AG04450 (cell line): ENCODE measurements at regions of chr15 and their contacts with region 1.

Region 1: DNA sequence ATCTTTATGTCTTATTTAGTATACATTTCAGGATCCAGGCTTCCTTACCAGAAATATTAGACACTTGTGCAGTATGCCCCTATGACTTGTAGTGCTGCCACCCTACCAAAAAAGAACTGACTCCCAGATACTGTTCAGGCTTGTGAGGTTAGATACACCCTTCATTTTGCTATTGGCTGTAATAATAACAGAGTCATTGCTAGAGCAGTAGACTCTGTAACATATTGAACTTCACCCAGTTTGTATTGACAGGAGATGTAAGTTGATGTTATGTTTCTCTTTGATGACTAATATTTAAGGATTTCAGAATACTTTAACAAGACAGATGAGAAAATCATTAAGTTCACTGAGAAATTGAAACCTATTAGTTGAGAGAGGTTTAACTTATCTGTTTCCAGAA is 32.9 kb downstream of the RNF111 start:
- DNase-seq: no peak
- H3K4me3 ChIP-seq: no peak overlapping the region
- H3K27ac ChIP-seq: no peak overlapping the region
- H3K27me3 ChIP-seq: no peaks in the 10 kb centered on the region
- CTCF ChIP-seq: no peak

Region 2: GRCh38 chr15:58987489-58988005 is 32.8 kb before region 1 on chr15 and contains the start of gene RNF111:
- CTCF ChIA-PET with region 1: no interaction called
- POLR2A ChIA-PET with region 1: no interaction called
- DNase-seq: peak; percentile 87
- H3K4me3 ChIP-seq: peak within 1 kb of the TSS; percentile 99
- H3K27ac ChIP-seq: peak within 1 kb of the TSS; percentile 77
- H3K27me3 ChIP-seq: no peaks in the 10 kb centered on the region
- CTCF ChIP-seq: no peak
- polyA plus RNA-seq, gene RNF111: 23.7 and 24.4 TPM in 2 replicates

Region 3: DNA sequence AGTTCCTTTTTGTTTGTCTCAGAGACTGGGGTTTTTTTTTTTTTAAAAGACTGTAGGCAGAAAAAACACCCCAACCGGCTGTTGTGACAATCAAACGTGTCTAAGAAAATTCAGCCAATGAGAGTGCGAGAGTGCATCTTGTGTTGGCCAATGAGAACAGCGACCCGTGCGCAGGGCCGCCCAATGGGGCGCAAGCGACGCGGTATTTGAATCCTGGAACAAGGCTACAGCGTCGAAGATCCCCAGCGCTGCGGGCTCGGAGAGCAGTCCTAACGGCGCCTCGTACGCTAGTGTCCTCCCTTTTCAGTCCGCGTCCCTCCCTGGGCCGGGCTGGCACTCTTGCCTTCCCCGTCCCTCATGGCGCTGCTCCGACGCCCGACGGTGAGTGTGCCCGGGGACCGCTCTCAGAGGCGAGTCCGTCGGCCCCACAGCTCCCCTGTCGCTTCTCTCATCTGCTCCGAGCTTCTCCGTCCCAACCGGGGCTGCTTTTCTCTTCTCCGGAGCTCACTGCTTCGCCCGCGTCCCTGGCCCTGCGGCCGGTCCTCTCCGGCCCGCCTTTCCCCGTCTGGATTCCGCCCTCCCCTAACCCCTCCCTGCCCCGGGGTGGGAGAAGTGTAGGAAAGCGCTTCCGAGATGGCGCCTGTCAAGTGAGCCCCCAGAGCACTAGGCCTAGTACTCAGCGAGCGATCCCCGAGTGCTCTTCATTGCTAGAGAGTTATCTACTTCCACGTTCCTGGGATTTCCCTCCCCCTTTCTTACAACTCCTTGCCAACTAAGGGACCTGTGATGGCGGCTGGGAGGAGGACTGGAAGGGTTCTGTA is 84.8 kb after region 1 on chr15 and contains the start of gene CCNB2:
- CTCF ChIA-PET with region 1: no interaction called
- POLR2A ChIA-PET with region 1: no interaction called
- DNase-seq: peak; percentile 83
- H3K4me3 ChIP-seq: peak within 1 kb of the TSS; percentile 92
- H3K27ac ChIP-seq: peak within 1 kb of the TSS; percentile 86
- H3K27me3 ChIP-seq: no peaks in the 10 kb centered on the region
- CTCF ChIP-seq: no peak
- polyA plus RNA-seq, gene CCNB2: 19.7 and 25.9 TPM in 2 replicates

Region 4: GRCh38 chr15:59216911-59217310 is 196.6 kb after region 1 on chr15:
- CTCF ChIA-PET with region 1: interaction called, 12 read pairs
- POLR2A ChIA-PET with region 1: no interaction called
- DNase-seq: no peak
- H3K4me3 ChIP-seq: no peak overlapping the region
- H3K27ac ChIP-seq: no peak overlapping the region
- H3K27me3 ChIP-seq: no peaks in the 10 kb centered on the region
- CTCF ChIP-seq: no peak